B cell (primary cell): ENCODE measurements at regions of chr6 and their contacts with region 1.

Region 1: GRCh38 chr6:52399511-52400312 is 20.4 kb upstream of the EFHC1 start:
- DNase-seq: peak; percentile 59
- ATAC-seq: peak; percentile 58
- H3K4me3 ChIP-seq: no peak overlapping the region
- H3K4me3 Mint-ChIP-seq: no peak overlapping the region
- H3K27ac ChIP-seq: no peak overlapping the region
- H3K27ac Mint-ChIP-seq: no peak overlapping the region
- H3K4me1 ChIP-seq: peaks cover 5 to 15% of the 10 kb centered on the region in 2 donors
- H3K4me1 Mint-ChIP-seq: peaks cover 28% of the 10 kb centered on the region
- H3K27me3 ChIP-seq: no peaks in the 10 kb centered on the region
- H3K27me3 Mint-ChIP-seq: no peaks in the 10 kb centered on the region
- CTCF ChIP-seq: peak; percentile 85

Region 2: DNA sequence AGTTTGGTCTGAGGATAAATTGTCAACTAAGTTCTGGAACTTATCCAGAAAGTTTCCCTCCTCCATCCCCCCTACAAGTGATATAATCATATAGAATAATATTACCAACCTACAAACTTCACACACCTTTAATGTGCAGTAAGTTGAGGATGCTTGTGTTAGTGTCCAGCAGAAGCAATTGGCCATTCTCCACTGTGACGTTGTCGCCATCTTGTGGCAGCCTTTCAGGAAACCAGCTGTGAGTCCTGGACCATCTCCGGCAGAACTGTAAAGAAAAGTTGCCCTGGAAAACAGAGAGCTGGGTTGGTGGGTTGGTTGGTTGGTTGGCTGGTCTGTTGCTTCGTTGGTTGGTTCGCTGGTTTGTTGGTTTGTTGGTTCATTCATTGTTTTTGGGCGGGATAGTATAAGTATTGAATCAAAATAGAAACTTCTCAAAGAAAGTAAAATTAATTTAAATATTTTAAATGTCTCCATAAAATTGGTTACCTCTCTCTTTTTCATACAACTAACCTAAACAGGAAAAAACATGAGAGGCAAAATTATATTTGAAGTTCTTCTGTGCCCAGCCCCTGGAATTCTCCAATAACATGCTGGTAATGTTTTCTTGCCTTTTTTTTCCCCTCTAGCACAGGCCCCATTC is 439.8 kb before region 1 on chr6:
- CTCF ChIA-PET with region 1: no interaction called
- POLR2A ChIA-PET with region 1: no interaction called
- intact Hi-C with region 1: no loop called
- DNase-seq: peak; percentile 50
- ATAC-seq: no peak
- H3K4me3 ChIP-seq: no peak overlapping the region
- H3K4me3 Mint-ChIP-seq: no peak overlapping the region
- H3K27ac ChIP-seq: no peak overlapping the region
- H3K27ac Mint-ChIP-seq: no peak overlapping the region
- H3K4me1 ChIP-seq: no peaks in the 10 kb centered on the region
- H3K4me1 Mint-ChIP-seq: peaks cover 1% of the 10 kb centered on the region
- H3K27me3 ChIP-seq: peaks cover 0 to 5% (median 1%) of the 10 kb centered on the region in 4 experiments
- H3K27me3 Mint-ChIP-seq: peaks cover 8% of the 10 kb centered on the region
- CTCF ChIP-seq: peak; percentile 52

Region 3: GRCh38 chr6:52087498-52087999 is 312.2 kb before region 1 on chr6 and contains the start of gene PKHD1:
- CTCF ChIA-PET with region 1: no interaction called
- POLR2A ChIA-PET with region 1: no interaction called
- intact Hi-C with region 1: loop called (anchors 10 kb)
- DNase-seq: no peak
- ATAC-seq: no peak
- H3K4me3 ChIP-seq: no peak within 1 kb of the TSS
- H3K4me3 Mint-ChIP-seq: no peak within 1 kb of the TSS
- H3K27ac ChIP-seq: no peak within 1 kb of the TSS
- H3K27ac Mint-ChIP-seq: no peak within 1 kb of the TSS
- H3K4me1 ChIP-seq: no peaks in the 10 kb centered on the region
- H3K4me1 Mint-ChIP-seq: no peaks in the 10 kb centered on the region
- H3K27me3 ChIP-seq: no peaks in the 10 kb centered on the region
- H3K27me3 Mint-ChIP-seq: no peaks in the 10 kb centered on the region
- CTCF ChIP-seq: no peak
- total RNA-seq, gene PKHD1: not detected in 2 replicates

Region 4: DNA sequence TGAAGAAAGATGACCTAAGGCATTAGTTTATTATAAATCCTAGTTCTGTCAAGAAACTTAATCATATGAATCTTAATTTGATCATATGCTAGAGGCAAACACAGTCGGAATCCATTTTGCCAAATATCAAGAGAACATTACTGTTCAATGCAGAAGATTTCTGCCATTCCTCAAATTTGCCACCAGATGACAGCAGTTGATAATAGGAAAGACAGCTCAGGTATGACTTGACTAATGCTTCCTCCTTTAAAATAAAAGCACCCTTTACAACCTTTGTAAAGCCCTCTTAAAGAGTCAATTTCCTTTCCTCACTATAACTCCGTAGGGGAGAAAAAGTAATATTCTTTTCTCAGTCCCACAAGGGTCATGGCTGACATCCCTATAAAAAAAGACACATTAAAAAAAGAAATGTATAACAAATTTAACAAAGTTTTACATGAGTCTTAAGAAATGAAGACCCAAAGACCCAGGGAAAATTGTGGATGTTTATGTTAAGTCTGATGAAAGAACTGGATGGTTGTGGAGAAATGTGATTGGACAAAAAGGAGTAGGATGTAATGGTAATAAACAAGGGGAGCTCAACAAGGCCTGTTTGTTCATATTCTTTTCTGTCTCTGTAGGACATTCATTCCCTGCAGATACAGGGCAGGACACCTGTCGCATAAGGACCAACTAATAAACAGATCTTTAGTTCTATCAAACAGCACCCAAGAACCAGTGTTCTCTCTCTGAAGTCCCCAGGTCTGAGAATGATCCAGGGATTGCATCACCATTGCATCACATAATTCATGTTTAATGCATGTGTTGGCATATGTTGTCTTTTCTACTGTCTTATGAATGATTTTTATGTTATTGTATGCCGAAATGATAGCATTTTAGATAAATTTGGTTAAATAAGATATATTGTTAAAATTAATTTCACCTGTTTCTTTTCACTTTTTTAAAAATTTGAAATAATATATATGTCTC is 236.5 kb before region 1 on chr6:
- CTCF ChIA-PET with region 1: no interaction called
- POLR2A ChIA-PET with region 1: no interaction called
- intact Hi-C with region 1: loop called (anchors 5 kb)
- DNase-seq: peak; percentile 13
- ATAC-seq: no peak
- H3K4me3 ChIP-seq: no peak overlapping the region
- H3K4me3 Mint-ChIP-seq: no peak overlapping the region
- H3K27ac ChIP-seq: no peak overlapping the region
- H3K27ac Mint-ChIP-seq: no peak overlapping the region
- H3K4me1 ChIP-seq: no peaks in the 10 kb centered on the region
- H3K4me1 Mint-ChIP-seq: no peaks in the 10 kb centered on the region
- H3K27me3 ChIP-seq: no peaks in the 10 kb centered on the region
- H3K27me3 Mint-ChIP-seq: peaks cover 10% of the 10 kb centered on the region
- CTCF ChIP-seq: peak; percentile 26

Region 5: DNA sequence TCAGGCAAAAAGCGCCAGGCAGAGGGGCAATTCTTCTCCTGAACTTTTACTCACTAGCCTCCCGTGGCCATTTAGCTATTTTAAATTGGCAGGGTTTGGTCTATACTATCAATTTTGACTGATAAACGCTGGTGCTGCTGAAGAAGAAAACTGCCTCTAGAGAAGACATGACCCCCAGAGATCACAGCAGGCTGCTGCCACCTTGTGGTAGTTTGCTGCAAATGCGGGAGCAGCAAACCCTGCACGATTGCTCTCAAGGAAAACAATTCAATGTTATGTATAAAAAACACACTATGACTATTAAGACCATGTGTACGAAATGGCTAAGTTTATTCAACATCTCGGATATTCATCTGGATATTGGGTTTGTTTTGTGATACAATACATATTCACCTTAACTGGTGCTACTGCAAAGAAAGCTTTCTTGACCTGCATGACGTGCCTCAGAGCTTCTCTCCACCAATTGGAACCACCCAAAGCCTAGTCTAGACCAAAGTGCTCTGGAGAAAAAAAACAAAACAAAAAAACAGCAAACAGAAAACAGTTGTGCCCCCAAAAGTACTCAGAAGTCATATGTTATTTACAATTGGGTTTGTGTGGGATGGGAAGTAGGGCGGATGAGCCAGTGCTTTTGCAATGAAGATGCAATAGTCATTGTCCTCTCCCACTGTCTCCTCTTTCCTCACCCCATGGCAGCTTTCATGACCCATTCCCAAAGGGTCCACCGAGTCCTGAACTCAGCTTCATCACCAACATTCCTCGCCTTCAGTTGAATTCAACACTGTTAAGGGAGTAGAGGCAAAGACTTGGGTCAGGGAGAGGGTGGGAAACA is 135.8 kb before region 1 on chr6:
- CTCF ChIA-PET with region 1: interaction called, 23 read pairs
- POLR2A ChIA-PET with region 1: no interaction called
- intact Hi-C with region 1: no loop called
- DNase-seq: peak; percentile 70
- ATAC-seq: peak; percentile 85
- H3K4me3 ChIP-seq: no peak overlapping the region
- H3K4me3 Mint-ChIP-seq: no peak overlapping the region
- H3K27ac ChIP-seq: no peak overlapping the region
- H3K27ac Mint-ChIP-seq: peak overlapping the region; percentile 23
- H3K4me1 ChIP-seq: no peaks in the 10 kb centered on the region
- H3K4me1 Mint-ChIP-seq: peaks cover 6% of the 10 kb centered on the region
- H3K27me3 ChIP-seq: no peaks in the 10 kb centered on the region
- H3K27me3 Mint-ChIP-seq: no peaks in the 10 kb centered on the region
- CTCF ChIP-seq: peak; percentile 97

Region 6: GRCh38 chr6:52361945-52362442 is 37.7 kb before region 1 on chr6 and contains the start of gene PAQR8:
- CTCF ChIA-PET with region 1: interaction called, 21 read pairs
- POLR2A ChIA-PET with region 1: no interaction called
- intact Hi-C with region 1: loop called (anchors 2 kb)
- DNase-seq: peak; percentile 88
- ATAC-seq: peak; percentile 90
- H3K4me3 ChIP-seq: peak within 1 kb of the TSS; percentile 54 to 100 (median 91)
- H3K4me3 Mint-ChIP-seq: peak within 1 kb of the TSS; percentile 96
- H3K27ac ChIP-seq: peak within 1 kb of the TSS; percentile 76 to 86
- H3K27ac Mint-ChIP-seq: peak within 1 kb of the TSS; percentile 92
- H3K4me1 ChIP-seq: peaks cover 14 to 17% of the 10 kb centered on the region in 2 donors
- H3K4me1 Mint-ChIP-seq: peaks cover 24% of the 10 kb centered on the region
- H3K27me3 ChIP-seq: no peaks in the 10 kb centered on the region
- H3K27me3 Mint-ChIP-seq: no peaks in the 10 kb centered on the region
- CTCF ChIP-seq: peak; percentile 5
- total RNA-seq, gene PAQR8: 8.5 and 8.9 TPM in 2 replicates